ENCODE measurements at regions of chr1 and their contacts with region 1.

Region 1: GRCh38 chr1:233172227-233172626 is 123.3 kb downstream of the PCNX2 start:
- DNase-seq: peak; percentile 1 to 31 (median 25)
- H3K4me3 ChIP-seq: no peak overlapping the region
- H3K4me3 Mint-ChIP-seq: no peak overlapping the region
- H3K27ac ChIP-seq: no peak overlapping the region
- H3K27ac Mint-ChIP-seq: peak overlapping the region in 2 of 7 donors; percentile 57 to 83
- H3K4me1 ChIP-seq: no peaks in the 10 kb centered on the region
- H3K4me1 Mint-ChIP-seq: no peaks in the 10 kb centered on the region
- H3K27me3 ChIP-seq: no peaks in the 10 kb centered on the region
- H3K27me3 Mint-ChIP-seq: no peaks in the 10 kb centered on the region
- CTCF ChIP-seq: peak; percentile 43

Region 2: DNA sequence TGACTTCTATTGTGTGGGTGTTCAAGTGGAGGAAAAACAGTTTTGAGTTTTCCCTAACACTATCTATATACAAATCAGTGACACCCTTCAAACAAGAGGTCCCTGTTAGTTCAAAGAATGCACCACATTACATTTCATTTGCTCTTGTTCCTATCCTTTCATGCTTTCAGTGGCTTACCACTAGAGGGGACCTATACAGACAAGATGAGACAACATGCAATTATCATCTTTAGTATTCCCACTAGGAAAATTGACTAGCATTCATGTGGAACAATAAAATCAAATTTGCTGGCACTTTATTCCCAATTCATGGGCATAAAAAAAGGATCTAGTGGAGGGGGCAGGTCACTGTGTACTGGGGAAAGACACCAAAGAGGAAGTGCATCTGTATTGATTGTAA is 529.0 kb before region 1 on chr1:
- intact Hi-C with region 1: loop called in 1 of 2 experiments (anchors 5 kb)
- DNase-seq: no peak
- H3K4me3 ChIP-seq: no peak overlapping the region
- H3K4me3 Mint-ChIP-seq: no peak overlapping the region
- H3K27ac ChIP-seq: no peak overlapping the region
- H3K27ac Mint-ChIP-seq: no peak overlapping the region
- H3K4me1 ChIP-seq: no peaks in the 10 kb centered on the region
- H3K4me1 Mint-ChIP-seq: no peaks in the 10 kb centered on the region
- H3K27me3 ChIP-seq: no peaks in the 10 kb centered on the region
- H3K27me3 Mint-ChIP-seq: peaks cover 0 to 2% (median 0%) of the 10 kb centered on the region in 3 donors
- CTCF ChIP-seq: no peak

Region 3: GRCh38 chr1:232922485-232922884 is 249.7 kb before region 1 on chr1:
- intact Hi-C with region 1: no loop called
- DNase-seq: no peak
- H3K4me3 ChIP-seq: no peak overlapping the region
- H3K4me3 Mint-ChIP-seq: no peak overlapping the region
- H3K27ac ChIP-seq: no peak overlapping the region
- H3K27ac Mint-ChIP-seq: no peak overlapping the region
- H3K4me1 ChIP-seq: no peaks in the 10 kb centered on the region
- H3K4me1 Mint-ChIP-seq: peaks cover 1% of the 10 kb centered on the region
- H3K27me3 ChIP-seq: no peaks in the 10 kb centered on the region
- H3K27me3 Mint-ChIP-seq: no peaks in the 10 kb centered on the region
- CTCF ChIP-seq: no peak